HCT116 (cell line): ENCODE measurements at regions of chr3 and their contacts with region 1.

Region 1: GRCh38 chr3:13091898-13092611 is 18.8 kb upstream of the IQSEC1 start:
- DNase-seq: peak; percentile 60
- ATAC-seq: peak; percentile 93
- H3K4me3 ChIP-seq: no peak overlapping the region
- H3K27ac ChIP-seq: no peak overlapping the region
- H3K4me1 ChIP-seq: peaks cover 5 to 7% of the 10 kb centered on the region in 2 experiments; a peak in 2 of 4 replicates
- H3K27me3 ChIP-seq: no peaks in the 10 kb centered on the region
- CTCF ChIP-seq: peak; percentile 87 to 91 (median 90)
- POLR2A ChIP-seq: no peak
- RAD21 ChIP-seq: peak; percentile 96

Region 2: GRCh38 chr3:13075318-13075717 is 16.7 kb before region 1 on chr3:
- CTCF ChIA-PET with region 1: no interaction called
- POLR2A ChIA-PET with region 1: no interaction called
- RAD21 ChIA-PET with region 1: no interaction called
- intact Hi-C with region 1: no loop called
- DNase-seq: no peak
- ATAC-seq: no peak
- H3K4me3 ChIP-seq: no peak overlapping the region
- H3K27ac ChIP-seq: no peak overlapping the region
- H3K4me1 ChIP-seq: no peaks in the 10 kb centered on the region
- H3K27me3 ChIP-seq: peaks cover 26% of the 10 kb centered on the region
- CTCF ChIP-seq: no peak
- POLR2A ChIP-seq: no peak
- RAD21 ChIP-seq: no peak

Region 3: DNA sequence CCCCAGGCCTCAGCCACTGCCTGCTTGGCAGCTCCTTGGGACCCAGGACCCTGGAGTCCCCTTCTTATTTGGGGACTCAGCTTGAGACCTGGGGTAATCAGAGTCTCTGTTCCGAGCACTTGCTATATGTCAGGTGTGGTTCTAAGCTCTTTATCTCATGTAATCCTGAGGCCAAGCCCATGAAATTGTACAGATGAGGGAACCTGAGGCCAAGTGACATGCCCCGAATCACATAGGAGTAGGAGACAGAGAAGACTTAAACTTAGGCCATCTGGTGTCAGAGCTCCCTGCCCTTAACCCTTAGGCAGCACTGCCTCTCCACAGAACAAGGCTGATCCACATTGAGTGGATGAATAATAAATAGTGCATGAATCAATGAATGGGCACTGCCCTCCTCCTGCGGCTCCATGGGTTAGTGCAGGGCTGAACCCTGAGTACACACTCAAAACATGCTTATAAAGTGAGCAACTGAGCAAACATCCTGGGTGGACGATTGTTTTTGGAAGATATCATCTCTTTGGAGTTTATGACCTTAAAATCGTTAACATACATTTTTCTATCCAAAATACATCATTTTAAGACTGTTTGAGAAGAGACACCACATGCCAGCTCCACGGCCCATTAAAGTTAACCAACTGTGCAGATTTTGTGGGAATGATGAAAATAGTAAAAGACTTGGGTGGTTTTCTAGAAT is 14.4 kb after region 1 on chr3:
- CTCF ChIA-PET with region 1: interaction called, 11 read pairs
- POLR2A ChIA-PET with region 1: no interaction called
- RAD21 ChIA-PET with region 1: no interaction called
- intact Hi-C with region 1: no loop called
- DNase-seq: no peak
- ATAC-seq: no peak
- H3K4me3 ChIP-seq: no peak overlapping the region
- H3K27ac ChIP-seq: no peak overlapping the region
- H3K4me1 ChIP-seq: peaks cover 11% of the 10 kb centered on the region in 2 experiments; a peak in 3 of 4 replicates
- H3K27me3 ChIP-seq: no peaks in the 10 kb centered on the region
- CTCF ChIP-seq: no peak
- POLR2A ChIP-seq: no peak
- RAD21 ChIP-seq: no peak

Region 4: DNA sequence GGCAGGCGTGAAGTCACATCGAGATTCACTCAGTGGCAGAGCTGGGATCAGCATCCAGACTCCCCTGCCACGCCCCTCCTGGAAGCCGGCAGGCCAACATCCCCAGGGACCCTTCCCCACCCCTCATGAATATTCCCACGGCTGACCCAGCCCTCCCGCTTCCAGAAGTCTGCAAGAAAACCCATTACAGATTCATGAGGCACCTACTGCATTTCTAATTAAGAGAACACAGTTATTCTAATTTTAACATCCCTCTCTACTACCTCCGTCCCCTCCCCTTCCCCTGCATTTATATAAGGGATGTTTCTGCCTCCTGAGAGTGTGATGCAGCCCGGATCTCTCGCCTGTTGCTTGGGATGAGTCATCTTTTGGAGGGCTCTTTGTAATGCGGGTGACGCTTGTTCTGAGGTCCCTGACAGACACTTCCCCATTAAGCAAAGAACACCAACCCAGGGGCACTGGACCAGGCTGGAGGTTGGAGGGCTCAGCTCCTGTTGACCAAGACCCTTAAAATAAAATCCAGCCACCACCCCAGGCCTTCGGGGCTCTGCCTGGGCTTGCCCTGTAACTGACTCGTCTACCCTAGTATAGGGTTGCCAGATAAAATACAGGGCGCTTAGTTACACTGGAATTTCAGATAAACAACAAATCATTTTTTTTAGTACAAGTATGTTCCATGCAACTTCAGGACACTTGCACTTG is 209.4 kb after region 1 on chr3:
- CTCF ChIA-PET with region 1: no interaction called
- POLR2A ChIA-PET with region 1: no interaction called
- RAD21 ChIA-PET with region 1: no interaction called
- intact Hi-C with region 1: loop called (anchors 10 kb)
- DNase-seq: peak; percentile 12
- ATAC-seq: peak; percentile 68
- H3K4me3 ChIP-seq: no peak overlapping the region
- H3K27ac ChIP-seq: no peak overlapping the region
- H3K4me1 ChIP-seq: peaks cover 8 to 17% of the 10 kb centered on the region in 2 experiments
- H3K27me3 ChIP-seq: no peaks in the 10 kb centered on the region
- CTCF ChIP-seq: no peak
- POLR2A ChIP-seq: no peak
- RAD21 ChIP-seq: no peak

Region 5: DNA sequence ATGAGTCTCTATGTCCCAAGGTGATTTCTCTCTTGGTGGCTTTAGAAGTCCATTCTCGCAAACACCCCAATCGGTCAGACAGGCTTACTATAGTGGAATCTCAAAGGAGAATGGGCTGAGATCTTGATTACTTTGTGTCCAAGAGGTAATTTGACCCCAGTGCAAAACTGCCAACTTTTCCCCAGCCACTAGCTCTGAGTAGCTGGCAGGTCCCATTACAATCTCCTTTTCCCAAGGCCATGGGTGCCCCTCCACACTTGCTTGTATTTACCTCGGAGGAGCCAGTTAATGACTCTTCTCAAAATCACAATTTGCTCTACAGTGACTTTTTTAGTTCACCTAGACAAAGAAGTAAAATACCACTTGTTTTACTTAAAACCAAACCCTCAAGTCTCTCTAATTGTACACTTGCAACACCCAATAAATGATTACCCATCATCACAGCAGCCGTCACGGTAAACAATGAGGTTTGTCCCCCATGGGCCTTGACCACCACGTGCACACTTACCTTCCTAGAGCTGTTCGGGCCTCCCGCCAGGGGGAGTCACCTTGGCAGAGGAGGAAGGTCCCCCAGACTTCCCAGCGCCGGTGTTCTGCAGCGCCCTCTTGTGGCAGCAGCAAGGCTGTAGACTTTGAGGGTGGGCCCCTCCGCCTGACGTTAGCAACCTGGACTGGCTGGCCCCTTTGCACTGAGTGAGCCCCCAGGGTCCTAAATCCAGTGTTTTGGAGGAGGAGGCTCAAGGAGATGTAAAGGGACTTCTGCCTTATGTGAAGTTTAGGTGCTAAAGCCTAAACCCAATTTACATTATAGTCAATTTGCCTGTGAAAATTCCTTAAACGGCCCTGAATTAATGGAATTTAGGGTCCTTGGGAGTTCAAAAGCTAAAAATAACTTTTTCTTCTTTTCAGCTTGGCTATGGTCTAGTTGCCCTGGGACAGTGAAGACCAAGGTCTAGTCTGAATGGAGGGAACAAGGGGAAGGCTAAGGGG is 369.4 kb after region 1 on chr3:
- CTCF ChIA-PET with region 1: interaction called, 16 read pairs
- POLR2A ChIA-PET with region 1: no interaction called
- RAD21 ChIA-PET with region 1: interaction called in 1 of 2 experiments, 3 read pairs
- intact Hi-C with region 1: loop called (anchors 1 kb)
- DNase-seq: peak; percentile 66
- ATAC-seq: peak; percentile 98
- H3K4me3 ChIP-seq: no peak overlapping the region
- H3K27ac ChIP-seq: no peak overlapping the region
- H3K4me1 ChIP-seq: peaks cover 2 to 8% of the 10 kb centered on the region in 2 experiments; a peak in 3 of 4 replicates
- H3K27me3 ChIP-seq: no peaks in the 10 kb centered on the region
- CTCF ChIP-seq: peak; percentile 88 to 96 (median 91)
- POLR2A ChIP-seq: no peak
- RAD21 ChIP-seq: peak; percentile 80

Region 6: DNA sequence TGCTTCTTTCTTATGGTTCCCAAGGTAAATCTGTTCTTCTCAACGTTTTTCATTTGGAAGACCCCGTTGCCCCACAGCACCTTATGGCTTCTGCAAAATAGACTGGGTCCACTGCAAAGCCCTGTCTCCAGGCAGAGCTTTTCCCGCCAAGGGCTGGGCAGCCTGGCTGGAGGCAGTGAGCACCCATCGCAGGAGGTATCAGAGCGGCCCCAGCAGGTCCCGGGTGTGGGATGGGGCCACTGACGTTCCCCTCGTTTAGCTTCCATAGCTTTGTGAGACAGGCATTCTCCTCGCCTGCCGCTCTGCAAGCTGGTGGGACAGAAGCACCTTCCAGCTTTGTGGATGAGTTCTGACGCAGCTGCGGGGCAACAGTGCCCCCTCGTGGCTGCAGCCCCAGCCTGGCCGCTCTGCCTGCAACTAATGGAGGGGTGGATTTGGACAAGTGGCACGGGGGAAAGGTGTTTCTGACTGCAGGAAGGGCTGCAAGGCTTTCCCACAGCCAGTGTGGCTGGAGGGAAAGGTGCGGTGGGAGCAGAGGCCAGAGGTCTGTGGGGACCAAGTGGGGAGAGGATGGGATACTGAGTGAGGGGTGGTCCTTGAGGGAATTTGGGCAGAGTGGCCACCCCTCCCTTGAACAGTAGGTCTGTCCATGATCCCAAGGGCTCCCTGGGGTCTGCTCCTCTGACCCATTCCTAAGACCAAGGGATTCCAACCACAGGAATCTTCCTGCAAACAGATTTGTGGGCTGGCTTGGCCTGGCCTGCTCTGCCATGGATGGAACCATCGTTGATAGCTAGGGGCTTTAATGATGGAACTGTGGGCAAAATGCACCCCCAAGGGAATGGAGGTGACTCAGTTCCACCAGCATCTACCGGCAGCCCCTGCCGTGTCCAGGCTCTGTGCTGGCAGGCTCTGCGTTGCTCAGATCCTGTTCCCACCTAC is 556.3 kb after region 1 on chr3:
- CTCF ChIA-PET with region 1: interaction called, 39 read pairs
- POLR2A ChIA-PET with region 1: no interaction called
- RAD21 ChIA-PET with region 1: interaction called in 1 of 2 experiments, 4 read pairs
- intact Hi-C with region 1: loop called (anchors 1 kb)
- DNase-seq: peak; percentile 75
- ATAC-seq: peak; percentile 81
- H3K4me3 ChIP-seq: peak overlapping the region in 1 of 2 experiments; percentile 1; a peak in 1 of 4 replicates
- H3K27ac ChIP-seq: no peak overlapping the region
- H3K4me1 ChIP-seq: peaks cover 9 to 45% of the 10 kb centered on the region in 2 experiments; a peak in 3 of 4 replicates
- H3K27me3 ChIP-seq: no peaks in the 10 kb centered on the region
- CTCF ChIP-seq: peak in 2 of 3 experiments; percentile 98 to 99; a peak in 4 of 6 replicates
- POLR2A ChIP-seq: no peak
- RAD21 ChIP-seq: no peak